Head of caudate nucleus (tissue), 42 donors: ENCODE measurements at regions of chr4 and their contacts with region 1.

Region 1: GRCh38 chr4:26583865-26584652 is at the start of gene TBC1D19:
- DNase-seq: peak; percentile 81 to 97 (median 91)

Region 2: DNA sequence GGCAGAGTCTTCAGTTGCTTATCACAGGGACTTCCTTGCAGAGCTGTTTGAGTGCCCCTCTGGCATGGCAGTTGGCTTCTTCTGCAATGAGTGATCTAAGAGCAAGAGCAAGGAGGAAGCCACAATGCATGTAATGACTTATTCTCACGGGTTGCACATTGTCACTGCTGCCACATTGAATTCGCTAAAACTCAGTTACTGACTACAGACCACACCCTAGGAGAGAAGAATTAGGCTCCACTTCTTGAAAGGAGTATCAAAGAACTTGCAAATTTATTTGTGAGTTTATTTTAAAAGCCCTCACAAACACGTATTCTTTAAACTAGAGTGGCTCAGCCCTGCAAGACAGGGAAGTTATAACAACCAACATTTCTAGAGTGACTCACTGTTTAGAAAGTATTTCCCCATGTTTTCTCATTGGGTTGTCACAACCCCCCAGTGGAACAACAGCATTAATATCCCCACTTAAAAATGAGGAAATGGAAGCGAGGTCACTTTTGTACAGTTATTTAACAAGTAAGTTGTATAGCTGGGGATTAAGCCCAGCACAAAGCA is 295.6 kb before region 1 on chr4:
- intact Hi-C with region 1: no loop called
- DNase-seq: peak in 2 of 42 donors; percentile 5 to 32

Region 3: DNA sequence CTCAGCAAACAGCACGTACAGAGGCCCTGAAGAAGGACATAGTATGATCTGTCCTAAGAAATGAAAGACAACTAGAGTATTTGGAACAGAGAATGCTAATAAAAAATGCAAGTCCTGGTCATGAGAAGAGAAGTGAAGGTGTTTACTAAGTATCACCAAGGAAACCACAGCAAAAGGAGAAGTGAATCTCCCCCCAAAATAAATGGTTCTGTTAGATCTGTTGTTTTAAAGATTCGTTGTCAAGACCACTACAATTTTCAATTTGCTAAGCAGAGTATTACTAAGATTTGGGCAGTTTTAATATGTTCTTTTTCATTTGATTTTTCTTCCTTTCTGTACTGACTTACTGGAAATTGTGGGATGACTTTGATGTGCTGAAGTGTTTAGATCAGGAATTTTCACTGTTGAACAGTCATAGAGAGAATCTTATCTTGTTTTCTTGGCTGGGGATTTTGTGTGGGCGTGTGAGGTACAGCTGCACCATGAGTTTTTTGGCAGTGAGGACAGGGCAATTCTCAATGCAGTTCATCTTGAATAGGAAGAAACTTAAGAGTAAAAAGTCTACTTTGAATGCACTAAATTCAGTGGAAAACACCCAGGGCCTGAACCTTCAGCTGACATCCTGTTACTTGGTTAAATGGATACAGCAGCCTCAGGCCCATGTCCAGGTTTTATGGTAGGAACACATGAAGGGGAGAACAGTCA is 408.8 kb after region 1 on chr4:
- intact Hi-C with region 1: loop called (anchors 10 kb)
- DNase-seq: peak in 31 of 42 donors; percentile 1 to 61 (median 27)